CD8-positive, alpha-beta T cell (primary cell): ENCODE measurements at regions of chr7 and their contacts with region 1.

Region 1: DNA sequence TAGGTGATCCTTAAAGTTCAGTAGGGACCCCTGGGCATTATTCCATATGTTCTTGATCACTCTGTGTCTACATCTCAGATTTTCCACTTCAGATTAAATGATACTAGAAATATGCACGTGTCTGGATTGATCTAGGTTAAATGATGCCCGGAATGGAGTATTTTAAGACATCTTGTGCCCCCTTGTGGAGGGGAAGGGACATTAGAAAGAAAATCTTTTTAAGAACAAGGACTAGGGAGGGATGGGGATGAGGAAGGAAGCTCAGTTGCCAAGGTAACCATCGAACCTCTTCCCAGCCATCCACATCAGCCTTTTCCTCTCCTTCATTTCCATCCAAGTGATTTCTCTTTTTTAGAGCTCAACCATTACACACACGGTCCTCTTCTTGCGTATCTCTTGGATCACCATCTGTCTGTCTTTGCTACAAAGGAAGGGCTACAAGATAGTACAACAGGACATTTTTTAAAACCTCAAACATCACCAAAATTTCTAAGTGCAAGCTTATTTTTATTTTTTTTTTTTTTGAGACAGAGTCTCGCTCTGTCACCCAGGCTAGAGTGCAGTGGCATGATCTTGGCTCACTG is 40.5 kb downstream of the PRSS2 start:
- DNase-seq: peak in 4 of 9 experiments; percentile 41 to 87 (median 72)
- ATAC-seq: no peak
- H3K4me3 ChIP-seq: no peak overlapping the region
- H3K4me3 Mint-ChIP-seq: peak overlapping the region; percentile 26
- H3K27ac ChIP-seq: peak overlapping the region; percentile 86 to 99
- H3K27ac Mint-ChIP-seq: peak overlapping the region; percentile 100
- H3K4me1 ChIP-seq: peaks cover 71% of the 10 kb centered on the region
- H3K4me1 Mint-ChIP-seq: peaks cover 83% of the 10 kb centered on the region
- H3K27me3 ChIP-seq: no peaks in the 10 kb centered on the region
- H3K27me3 Mint-ChIP-seq: no peaks in the 10 kb centered on the region
- CTCF ChIP-seq: peak; percentile 80

Region 2: GRCh38 chr7:142345811-142346210 is 465.4 kb before region 1 on chr7:
- CTCF ChIA-PET with region 1: interaction called, 4 read pairs
- POLR2A ChIA-PET with region 1: interaction called, 10 read pairs
- intact Hi-C with region 1: no loop called
- DNase-seq: peak in 5 of 9 experiments; percentile 33 to 70 (median 51)
- ATAC-seq: peak; percentile 90
- H3K4me3 ChIP-seq: no peak overlapping the region
- H3K4me3 Mint-ChIP-seq: peak overlapping the region; percentile 38
- H3K27ac ChIP-seq: peak overlapping the region; percentile 11 to 17
- H3K27ac Mint-ChIP-seq: peak overlapping the region; percentile 66
- H3K4me1 ChIP-seq: peaks cover 17% of the 10 kb centered on the region
- H3K4me1 Mint-ChIP-seq: peaks cover 35% of the 10 kb centered on the region
- H3K27me3 ChIP-seq: no peaks in the 10 kb centered on the region
- H3K27me3 Mint-ChIP-seq: no peaks in the 10 kb centered on the region
- CTCF ChIP-seq: no peak

Region 3: GRCh38 chr7:142535123-142535779 is 276.0 kb before region 1 on chr7:
- CTCF ChIA-PET with region 1: interaction called, 22 read pairs
- POLR2A ChIA-PET with region 1: interaction called, 23 read pairs
- intact Hi-C with region 1: loop called (anchors 2 to 5 kb)
- DNase-seq: peak; percentile 24 to 82 (median 68)
- ATAC-seq: peak; percentile 77
- H3K4me3 ChIP-seq: peak overlapping the region; percentile 20 to 22
- H3K4me3 Mint-ChIP-seq: peak overlapping the region; percentile 38
- H3K27ac ChIP-seq: peak overlapping the region; percentile 42 to 46
- H3K27ac Mint-ChIP-seq: peak overlapping the region; percentile 73
- H3K4me1 ChIP-seq: peaks cover 24% of the 10 kb centered on the region
- H3K4me1 Mint-ChIP-seq: peaks cover 29% of the 10 kb centered on the region
- H3K27me3 ChIP-seq: no peaks in the 10 kb centered on the region
- H3K27me3 Mint-ChIP-seq: no peaks in the 10 kb centered on the region
- CTCF ChIP-seq: no peak

Region 4: GRCh38 chr7:142669074-142669654 is 142.1 kb before region 1 on chr7:
- CTCF ChIA-PET with region 1: interaction called, 15 read pairs
- POLR2A ChIA-PET with region 1: interaction called, 3 read pairs
- intact Hi-C with region 1: loop called (anchors 1 kb)
- DNase-seq: peak in 2 of 9 experiments; percentile 41 to 56
- ATAC-seq: peak; percentile 29
- H3K4me3 ChIP-seq: no peak overlapping the region
- H3K4me3 Mint-ChIP-seq: no peak overlapping the region
- H3K27ac ChIP-seq: no peak overlapping the region
- H3K27ac Mint-ChIP-seq: peak overlapping the region; percentile 20
- H3K4me1 ChIP-seq: peaks cover 20% of the 10 kb centered on the region
- H3K4me1 Mint-ChIP-seq: peaks cover 25% of the 10 kb centered on the region
- H3K27me3 ChIP-seq: no peaks in the 10 kb centered on the region
- H3K27me3 Mint-ChIP-seq: no peaks in the 10 kb centered on the region
- CTCF ChIP-seq: peak; percentile 30

Region 5: DNA sequence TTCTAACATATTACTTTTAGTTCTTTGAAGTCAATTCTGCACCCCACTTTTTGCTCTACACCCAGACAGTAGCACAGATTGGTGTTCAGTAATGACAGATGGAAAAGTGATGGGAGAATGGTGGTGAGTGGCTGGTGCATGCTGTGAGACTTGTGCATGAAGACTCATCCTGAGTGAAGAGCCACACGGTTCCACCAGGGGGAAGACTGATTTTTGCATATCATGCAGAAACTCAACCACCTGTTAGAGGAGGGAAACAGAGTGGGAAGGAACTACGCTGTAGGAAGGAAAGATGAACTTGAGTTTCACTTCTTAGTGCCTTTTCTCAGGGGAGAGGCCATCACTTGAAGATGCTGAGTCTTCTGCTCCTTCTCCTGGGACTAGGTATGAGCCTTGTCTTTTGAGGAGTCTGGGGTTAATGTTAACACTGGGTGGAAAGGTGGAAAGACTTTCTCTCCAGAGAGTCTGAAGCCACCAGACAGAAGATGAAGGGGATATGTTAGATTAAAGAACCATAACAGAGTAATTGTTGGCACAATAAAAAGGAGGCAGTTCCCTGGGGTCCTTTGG is 71.2 kb before region 1 on chr7:
- CTCF ChIA-PET with region 1: no interaction called
- POLR2A ChIA-PET with region 1: no interaction called
- intact Hi-C with region 1: no loop called
- DNase-seq: peak in 2 of 9 experiments; percentile 29 to 46
- ATAC-seq: peak; percentile 61
- H3K4me3 ChIP-seq: no peak overlapping the region
- H3K4me3 Mint-ChIP-seq: peak overlapping the region; percentile 61
- H3K27ac ChIP-seq: no peak overlapping the region
- H3K27ac Mint-ChIP-seq: peak overlapping the region; percentile 57
- H3K4me1 ChIP-seq: no peaks in the 10 kb centered on the region
- H3K4me1 Mint-ChIP-seq: peaks cover 10% of the 10 kb centered on the region
- H3K27me3 ChIP-seq: no peaks in the 10 kb centered on the region
- H3K27me3 Mint-ChIP-seq: no peaks in the 10 kb centered on the region
- CTCF ChIP-seq: no peak

Region 6: GRCh38 chr7:142833174-142834048 is 22.2 kb after region 1 on chr7:
- CTCF ChIA-PET with region 1: interaction called, 13 read pairs
- POLR2A ChIA-PET with region 1: interaction called, 4 read pairs
- intact Hi-C with region 1: no loop called
- DNase-seq: peak in 1 of 9 experiments; percentile 16
- ATAC-seq: no peak
- H3K4me3 ChIP-seq: no peak overlapping the region
- H3K4me3 Mint-ChIP-seq: no peak overlapping the region
- H3K27ac ChIP-seq: no peak overlapping the region
- H3K27ac Mint-ChIP-seq: no peak overlapping the region
- H3K4me1 ChIP-seq: no peaks in the 10 kb centered on the region
- H3K4me1 Mint-ChIP-seq: peaks cover 9% of the 10 kb centered on the region
- H3K27me3 ChIP-seq: no peaks in the 10 kb centered on the region
- H3K27me3 Mint-ChIP-seq: no peaks in the 10 kb centered on the region
- CTCF ChIP-seq: no peak

Region 7: GRCh38 chr7:143214789-143215679 is 403.8 kb after region 1 on chr7:
- CTCF ChIA-PET with region 1: interaction called, 5 read pairs
- POLR2A ChIA-PET with region 1: no interaction called
- intact Hi-C with region 1: loop called in 1 of 2 experiments (anchors 10 kb)
- DNase-seq: peak; percentile 25 to 87 (median 59)
- ATAC-seq: peak; percentile 98
- H3K4me3 ChIP-seq: no peak overlapping the region
- H3K4me3 Mint-ChIP-seq: no peak overlapping the region
- H3K27ac ChIP-seq: no peak overlapping the region
- H3K27ac Mint-ChIP-seq: no peak overlapping the region
- H3K4me1 ChIP-seq: no peaks in the 10 kb centered on the region
- H3K4me1 Mint-ChIP-seq: no peaks in the 10 kb centered on the region
- H3K27me3 ChIP-seq: no peaks in the 10 kb centered on the region
- H3K27me3 Mint-ChIP-seq: peaks cover 4% of the 10 kb centered on the region
- CTCF ChIP-seq: peak; percentile 100

Region 8: GRCh38 chr7:143380255-143380645 is 569.0 kb after region 1 on chr7:
- CTCF ChIA-PET with region 1: no interaction called
- POLR2A ChIA-PET with region 1: interaction called, 9 read pairs
- intact Hi-C with region 1: loop called (anchors 5 kb)
- DNase-seq: peak; percentile 82 to 94 (median 89)
- ATAC-seq: peak; percentile 42
- H3K4me3 ChIP-seq: peak overlapping the region; percentile 96 to 99
- H3K4me3 Mint-ChIP-seq: peak overlapping the region; percentile 90
- H3K27ac ChIP-seq: peak overlapping the region; percentile 84 to 95
- H3K27ac Mint-ChIP-seq: peak overlapping the region; percentile 94
- H3K4me1 ChIP-seq: peaks cover 81% of the 10 kb centered on the region
- H3K4me1 Mint-ChIP-seq: peaks cover 40% of the 10 kb centered on the region
- H3K27me3 ChIP-seq: no peaks in the 10 kb centered on the region
- H3K27me3 Mint-ChIP-seq: no peaks in the 10 kb centered on the region
- CTCF ChIP-seq: peak; percentile 61